GM18951 (cell line): ENCODE measurements at regions of chr6 and their contacts with region 1.

Region 1: GRCh38 chr6:11050731-11051130 is 6.6 kb upstream of the ELOVL2 start:
- POLR2A ChIP-seq: no peak

Region 2: DNA sequence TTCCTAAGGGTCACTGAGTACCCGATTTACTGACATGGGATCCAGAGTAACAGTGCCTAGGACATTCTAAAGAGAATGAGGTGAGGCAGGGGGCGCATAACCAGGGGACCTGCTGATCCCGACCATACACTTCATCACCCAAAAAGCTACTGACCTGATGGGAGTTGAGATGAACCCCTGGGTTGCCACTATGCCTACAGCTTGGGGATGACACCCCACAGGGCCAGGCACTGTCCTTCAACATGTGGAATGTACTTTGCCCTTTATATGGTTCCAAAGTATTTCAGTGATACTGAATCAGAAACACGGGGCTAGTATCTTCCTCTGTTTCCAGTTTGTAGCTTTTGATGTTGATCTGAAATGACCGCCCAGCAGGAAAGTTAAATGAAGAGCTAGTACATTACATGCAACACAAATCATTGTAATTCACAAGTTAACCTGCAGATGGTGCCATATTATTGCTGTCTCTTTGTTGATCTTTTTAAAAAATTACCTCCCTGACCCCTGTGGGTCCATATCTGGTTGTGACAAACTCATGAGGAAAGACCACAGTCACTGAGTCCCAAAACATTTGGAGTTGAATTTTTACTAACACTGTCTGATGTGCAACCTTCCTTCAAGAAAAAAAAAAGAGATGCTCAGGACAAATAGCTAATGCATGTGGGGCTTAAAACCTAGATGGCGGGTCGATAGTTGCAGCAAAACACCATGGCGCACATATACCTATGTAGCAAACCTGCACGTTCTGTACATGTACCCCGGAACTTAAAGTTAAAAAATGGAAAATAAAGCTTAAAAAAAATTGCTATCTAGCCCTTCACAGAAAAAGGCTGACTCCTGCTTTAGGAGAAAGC is 572.3 kb before region 1 on chr6:
- in situ Hi-C with region 1: loop called (anchors 25 kb)
- POLR2A ChIP-seq: no peak

Region 3: GRCh38 chr6:10676403-10676802 is 374.3 kb before region 1 on chr6:
- in situ Hi-C with region 1: no loop called
- POLR2A ChIP-seq: no peak